ENCODE measurements at regions of chr4 and their contacts with region 1.

Region 1: DNA sequence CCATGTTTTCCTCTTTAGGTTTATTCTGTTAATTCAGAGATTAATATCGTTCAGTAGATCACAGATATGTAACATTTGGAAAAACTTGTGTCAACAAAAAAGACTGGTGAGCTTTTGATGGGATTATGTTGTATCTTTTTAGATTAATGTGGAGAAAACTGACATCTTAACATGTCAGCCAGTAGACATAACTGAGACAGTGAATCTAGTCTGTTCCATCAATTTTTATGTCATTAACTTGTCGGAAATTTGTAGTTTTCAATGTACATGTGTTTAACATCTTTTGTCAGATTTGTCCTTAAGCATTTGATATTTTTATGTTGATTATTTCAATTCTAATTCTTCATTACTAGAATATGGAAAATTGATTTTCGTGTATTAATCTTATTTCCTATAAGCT is 42.0 kb downstream of the APELA start:
- DNase-seq: no peak
- ATAC-seq: no peak

Region 2: DNA sequence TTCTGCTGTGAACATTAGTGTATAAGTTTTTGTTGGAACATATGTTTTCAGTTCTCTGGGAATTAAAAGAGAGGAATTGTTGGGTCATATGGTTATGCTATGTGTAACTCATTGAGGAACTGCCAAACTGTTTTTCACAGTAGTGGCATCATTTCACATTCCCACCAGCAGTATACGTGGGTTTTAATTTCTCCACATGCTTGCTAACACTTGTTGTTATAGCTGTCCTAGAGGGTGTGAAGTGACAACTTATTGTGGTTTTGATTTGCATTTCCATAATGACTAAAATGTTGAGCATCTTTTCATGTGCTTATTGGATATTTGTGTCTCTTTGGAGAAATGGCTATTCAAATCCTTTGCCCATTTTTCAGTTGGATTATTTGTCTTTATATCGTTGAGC is 28.3 kb before region 1 on chr4:
- intact Hi-C with region 1: loop called (anchors 1 kb)
- DNase-seq: no peak
- ATAC-seq: no peak

Region 3: GRCh38 chr4:165016971-165017370 is 98.0 kb after region 1 on chr4:
- intact Hi-C with region 1: no loop called
- DNase-seq: no peak
- ATAC-seq: no peak

Measured in sciatic nerve (tissue), 2 donors.